Vagina (tissue), 2 donors: ENCODE measurements at regions of chr21 and their contacts with region 1.

Region 1: GRCh38 chr21:37366482-37367316 is at the start of gene DYRK1A:
- DNase-seq: peak in 1 of 2 donors; percentile 99
- H3K4me3 ChIP-seq: peak within 1 kb of the TSS; percentile 78 to 100
- H3K27ac ChIP-seq: peak within 1 kb of the TSS; percentile 100
- H3K4me1 ChIP-seq: peaks cover 44% of the 10 kb centered on the region
- H3K27me3 ChIP-seq: no peaks in the 10 kb centered on the region
- CTCF ChIP-seq: no peak
- POLR2A ChIP-seq: peak in 1 of 2 donors; percentile 27
- total RNA-seq, gene DYRK1A: 78.1 TPM

Region 2: GRCh38 chr21:36859744-36860501 is 506.8 kb before region 1 on chr21:
- intact Hi-C with region 1: no loop called
- DNase-seq: no peak
- H3K4me3 ChIP-seq: no peak overlapping the region
- H3K27ac ChIP-seq: no peak overlapping the region
- H3K4me1 ChIP-seq: no peaks in the 10 kb centered on the region
- H3K27me3 ChIP-seq: no peaks in the 10 kb centered on the region
- CTCF ChIP-seq: no peak
- POLR2A ChIP-seq: no peak

Region 3: GRCh38 chr21:37072988-37073416 is 293.7 kb before region 1 on chr21 and contains the starts of genes PIGP and TTC3:
- intact Hi-C with region 1: loop called (anchors 5 kb)
- DNase-seq: peak in 1 of 2 donors; percentile 90
- H3K4me3 ChIP-seq: peak within 1 kb of the TSS; percentile 85 to 98
- H3K27ac ChIP-seq: peak within 1 kb of the TSS; percentile 97
- H3K4me1 ChIP-seq: peaks cover 24% of the 10 kb centered on the region
- H3K27me3 ChIP-seq: no peaks in the 10 kb centered on the region
- CTCF ChIP-seq: no peak
- POLR2A ChIP-seq: peak in 1 of 2 donors; percentile 93
- total RNA-seq, gene PIGP: 13.0 TPM
- total RNA-seq, gene TTC3: 98.0 TPM

Region 4: GRCh38 chr21:37267269-37268184 is 99.2 kb before region 1 on chr21 and contains the start of gene VPS26C:
- intact Hi-C with region 1: loop called (anchors 2 kb)
- DNase-seq: peak; percentile 99
- H3K4me3 ChIP-seq: peak within 1 kb of the TSS; percentile 87 to 95
- H3K27ac ChIP-seq: peak within 1 kb of the TSS; percentile 97
- H3K4me1 ChIP-seq: peaks cover 43% of the 10 kb centered on the region
- H3K27me3 ChIP-seq: no peaks in the 10 kb centered on the region
- CTCF ChIP-seq: no peak
- POLR2A ChIP-seq: peak in 1 of 2 donors; percentile 58
- total RNA-seq, gene VPS26C: 49.6 TPM

Region 5: DNA sequence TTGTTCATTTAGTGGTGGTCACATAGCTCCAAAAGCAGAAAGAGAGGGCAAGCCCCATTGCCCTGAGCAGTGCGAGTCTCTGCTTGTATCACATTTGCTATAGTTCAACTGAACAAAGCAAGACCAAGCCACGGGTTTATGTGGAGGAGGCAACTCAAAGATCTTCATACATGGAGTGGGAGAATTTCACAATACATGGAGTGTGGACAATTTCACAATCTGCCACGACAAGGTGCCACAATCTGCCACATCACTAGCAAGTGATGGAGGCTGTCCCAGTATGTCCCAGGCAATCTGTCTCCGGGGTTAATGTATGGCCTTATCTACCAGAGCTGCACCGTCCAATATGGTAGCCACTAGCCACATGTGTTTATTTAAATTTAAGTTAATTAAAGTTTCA is 44.6 kb before region 1 on chr21:
- intact Hi-C with region 1: no loop called
- DNase-seq: no peak
- H3K4me3 ChIP-seq: no peak overlapping the region
- H3K27ac ChIP-seq: no peak overlapping the region
- H3K4me1 ChIP-seq: no peaks in the 10 kb centered on the region
- H3K27me3 ChIP-seq: no peaks in the 10 kb centered on the region
- CTCF ChIP-seq: no peak
- POLR2A ChIP-seq: no peak

Region 6: DNA sequence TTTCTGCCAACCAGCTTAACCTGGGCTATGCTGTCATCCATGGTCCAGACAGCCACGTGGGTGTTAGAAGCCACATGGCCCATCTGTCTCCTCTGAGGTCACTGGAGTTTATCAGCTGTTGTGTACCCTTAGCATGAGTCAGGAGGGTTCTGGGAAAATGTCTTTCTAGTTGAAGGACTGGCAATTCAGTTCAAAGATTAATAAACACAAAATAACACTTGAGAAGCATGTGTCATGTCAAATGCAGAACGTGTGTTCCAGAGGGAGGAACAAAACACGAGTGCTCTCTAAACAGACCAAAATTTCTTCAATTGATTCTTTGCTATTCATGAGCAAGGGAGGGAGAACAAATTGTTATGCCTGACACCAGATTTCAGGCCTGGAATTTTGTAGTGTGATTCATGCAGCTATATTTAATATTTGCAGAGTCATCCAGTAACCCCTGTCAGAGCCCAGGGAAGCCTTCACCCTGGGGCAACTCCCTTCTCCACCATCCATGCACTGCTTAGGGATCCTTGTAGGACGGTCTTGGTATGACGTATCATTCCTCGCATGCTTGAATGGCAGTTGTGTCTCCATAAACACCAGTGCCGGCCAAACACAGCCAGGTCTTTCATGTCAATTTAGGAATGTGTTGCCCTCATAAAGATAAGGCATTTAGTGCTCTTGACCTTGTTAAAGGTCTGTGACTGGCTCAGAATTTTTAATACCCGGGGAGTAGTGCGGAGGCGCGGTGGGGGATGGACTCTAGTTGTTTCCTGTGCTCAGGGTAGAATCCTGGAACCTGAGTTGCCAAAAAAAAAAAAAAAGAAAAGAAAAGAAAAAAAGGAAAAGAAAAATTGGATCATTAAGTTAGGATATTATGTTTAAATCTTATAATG is 27.8 kb before region 1 on chr21:
- intact Hi-C with region 1: loop called (anchors 2 kb)
- DNase-seq: no peak
- H3K4me3 ChIP-seq: peak overlapping the region in 1 of 2 donors; percentile 21
- H3K27ac ChIP-seq: peak overlapping the region; percentile 59
- H3K4me1 ChIP-seq: peaks cover 24% of the 10 kb centered on the region
- H3K27me3 ChIP-seq: no peaks in the 10 kb centered on the region
- CTCF ChIP-seq: no peak
- POLR2A ChIP-seq: no peak

Region 7: DNA sequence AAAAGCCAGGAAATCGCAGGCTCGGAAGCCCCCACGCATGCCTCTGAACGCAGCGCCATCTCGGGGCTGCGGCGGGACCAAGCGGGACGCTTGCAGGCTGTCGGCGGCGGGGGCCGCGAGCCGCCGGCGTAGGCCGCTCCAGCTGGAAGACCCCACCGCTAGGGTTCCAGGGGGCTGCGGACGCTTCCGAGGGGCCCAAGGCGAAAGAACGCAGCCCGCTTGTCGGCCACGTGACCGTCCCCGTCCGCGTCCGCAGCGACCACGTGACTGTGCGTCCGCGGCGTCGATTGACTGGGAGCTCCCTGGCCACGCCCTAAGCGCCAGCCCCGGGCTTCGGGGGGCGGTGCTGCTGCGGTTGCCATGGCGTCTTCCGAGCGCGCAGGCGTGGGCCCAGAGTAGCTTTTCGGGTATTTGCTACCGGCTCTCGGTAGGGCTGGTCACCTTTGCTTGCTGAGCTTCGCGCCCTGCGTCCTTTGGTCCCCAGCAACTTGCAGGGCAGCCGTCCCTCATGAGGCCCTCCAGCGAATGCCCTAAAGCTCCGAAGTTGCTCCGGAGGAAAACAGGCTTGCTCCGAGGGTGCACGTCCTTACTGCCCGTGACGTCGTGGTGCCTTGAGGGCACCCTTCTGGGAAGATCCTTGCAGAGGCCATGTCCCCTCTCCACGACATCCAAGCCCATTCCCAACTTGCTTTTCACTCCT is 197.1 kb after region 1 on chr21:
- intact Hi-C with region 1: loop called (anchors 10 kb)
- DNase-seq: peak in 1 of 2 donors; percentile 95
- H3K4me3 ChIP-seq: peak overlapping the region; percentile 55 to 72
- H3K27ac ChIP-seq: peak overlapping the region; percentile 96
- H3K4me1 ChIP-seq: peaks cover 14% of the 10 kb centered on the region
- H3K27me3 ChIP-seq: no peaks in the 10 kb centered on the region
- CTCF ChIP-seq: peak in 1 of 3 experiments; percentile 27
- POLR2A ChIP-seq: peak in 1 of 2 donors; percentile 27